ENCODE measurements at regions of chr2 and their contacts with region 1.

Region 1: DNA sequence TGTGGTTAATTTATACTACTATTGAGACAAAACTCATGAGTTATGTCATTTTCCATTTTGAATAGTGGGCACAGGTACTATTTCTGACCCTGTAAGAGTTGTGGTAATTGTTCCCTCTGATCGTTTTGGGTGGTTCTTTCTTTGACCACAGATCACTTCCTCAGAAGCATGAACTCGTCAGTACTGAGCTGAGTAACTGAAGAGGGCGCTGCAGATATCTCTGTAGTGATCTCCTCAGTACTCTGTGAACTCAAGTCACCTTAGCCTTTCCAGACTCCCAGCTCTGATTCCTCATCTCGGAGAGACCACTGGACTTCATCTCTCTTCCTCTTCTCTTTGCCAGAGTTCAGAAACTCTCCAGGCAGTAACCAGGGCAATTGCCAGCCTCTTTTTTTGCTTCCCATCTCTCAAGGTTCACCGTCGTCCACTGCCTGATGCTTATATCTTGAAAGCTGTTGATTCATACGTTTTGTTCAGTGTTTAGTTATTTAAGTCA is 9.4 kb upstream of the IL1RL1 start:
- DNase-seq: peak; percentile 88
- H3K4me3 Mint-ChIP-seq: peak overlapping the region; percentile 67
- H3K27ac Mint-ChIP-seq: peak overlapping the region; percentile 93
- H3K4me1 Mint-ChIP-seq: peaks cover 54% of the 10 kb centered on the region
- H3K27me3 Mint-ChIP-seq: peaks cover 2% of the 10 kb centered on the region

Region 2: DNA sequence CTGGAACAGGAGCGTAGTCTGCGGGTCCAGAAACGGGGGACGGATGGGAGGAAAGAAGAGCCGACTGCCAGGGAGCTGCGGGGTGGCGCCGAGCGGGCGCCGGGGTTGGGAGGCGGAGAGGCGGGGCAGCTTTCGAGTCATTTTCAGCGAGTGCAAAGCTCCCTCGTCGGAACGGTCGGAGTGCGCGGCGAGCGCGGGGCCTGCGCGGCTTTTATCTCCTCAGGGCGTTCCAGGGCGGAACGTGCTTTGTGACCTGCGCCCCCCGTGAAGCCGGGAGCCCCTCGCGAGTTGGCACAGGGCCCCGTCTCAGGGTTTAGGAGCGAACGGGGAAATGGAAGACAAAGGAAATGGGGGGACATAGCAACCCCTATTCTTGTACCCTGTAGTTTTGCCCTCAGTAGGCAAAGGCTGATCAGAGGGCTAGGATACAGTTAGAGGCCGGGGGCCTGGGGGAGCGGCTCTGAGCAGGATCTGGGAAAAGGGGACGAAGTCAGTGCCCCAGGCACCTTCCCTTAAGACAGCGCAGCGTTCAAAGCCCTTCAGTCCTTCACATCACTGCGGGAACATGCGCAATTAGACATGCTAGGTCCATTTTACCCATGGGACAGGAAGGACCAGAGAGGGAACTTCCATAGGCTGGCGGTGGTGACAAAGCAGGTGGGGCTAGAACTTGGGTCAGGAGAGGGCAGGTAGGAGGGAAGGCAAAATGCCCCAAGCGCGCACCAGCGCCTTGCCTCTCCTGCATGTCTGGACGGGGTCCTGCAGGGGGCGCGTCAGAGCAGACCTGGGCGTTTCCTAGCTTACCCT is 50.7 kb before region 1 on chr2:
- intact Hi-C with region 1: loop called (anchors 1 kb)
- DNase-seq: peak; percentile 87
- H3K4me3 Mint-ChIP-seq: peak overlapping the region; percentile 84
- H3K27ac Mint-ChIP-seq: peak overlapping the region; percentile 87
- H3K4me1 Mint-ChIP-seq: peaks cover 33% of the 10 kb centered on the region
- H3K27me3 Mint-ChIP-seq: peaks cover 2% of the 10 kb centered on the region

Region 3: DNA sequence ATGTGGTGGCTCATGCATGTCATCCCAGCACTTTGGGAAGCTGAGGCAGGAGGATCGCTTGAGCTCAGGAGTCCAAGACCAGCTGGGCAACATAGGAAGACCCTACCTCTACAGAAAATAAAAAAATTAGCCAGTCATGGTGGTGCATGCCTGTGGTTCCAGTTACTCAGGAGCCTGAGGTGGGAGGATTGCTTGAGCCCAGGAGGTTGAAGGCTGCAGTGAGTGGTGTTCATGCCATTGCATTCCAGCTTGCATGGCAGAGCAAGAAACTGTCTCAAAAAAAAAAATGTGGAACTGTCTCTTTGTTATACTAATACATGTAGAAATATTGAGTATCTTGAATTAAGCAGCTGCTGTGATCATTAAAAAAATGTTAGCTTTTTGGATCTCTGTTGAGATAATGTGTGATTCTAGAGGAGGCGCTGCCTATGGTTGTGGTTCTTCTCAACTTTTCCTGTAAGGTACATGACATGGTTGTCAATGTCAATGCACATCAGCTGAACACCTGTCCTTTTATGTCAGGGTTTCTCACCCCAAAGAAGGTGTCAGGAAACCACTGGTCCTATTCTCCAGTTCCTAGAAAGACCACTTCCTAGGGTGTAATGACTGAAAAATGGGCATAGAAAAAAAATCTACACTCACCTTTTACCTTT is 25.2 kb before region 1 on chr2:
- intact Hi-C with region 1: loop called (anchors 2 kb)
- DNase-seq: peak; percentile 81
- H3K4me3 Mint-ChIP-seq: peak overlapping the region; percentile 8
- H3K27ac Mint-ChIP-seq: peak overlapping the region; percentile 65
- H3K4me1 Mint-ChIP-seq: peaks cover 54% of the 10 kb centered on the region
- H3K27me3 Mint-ChIP-seq: no peaks in the 10 kb centered on the region

Region 4: DNA sequence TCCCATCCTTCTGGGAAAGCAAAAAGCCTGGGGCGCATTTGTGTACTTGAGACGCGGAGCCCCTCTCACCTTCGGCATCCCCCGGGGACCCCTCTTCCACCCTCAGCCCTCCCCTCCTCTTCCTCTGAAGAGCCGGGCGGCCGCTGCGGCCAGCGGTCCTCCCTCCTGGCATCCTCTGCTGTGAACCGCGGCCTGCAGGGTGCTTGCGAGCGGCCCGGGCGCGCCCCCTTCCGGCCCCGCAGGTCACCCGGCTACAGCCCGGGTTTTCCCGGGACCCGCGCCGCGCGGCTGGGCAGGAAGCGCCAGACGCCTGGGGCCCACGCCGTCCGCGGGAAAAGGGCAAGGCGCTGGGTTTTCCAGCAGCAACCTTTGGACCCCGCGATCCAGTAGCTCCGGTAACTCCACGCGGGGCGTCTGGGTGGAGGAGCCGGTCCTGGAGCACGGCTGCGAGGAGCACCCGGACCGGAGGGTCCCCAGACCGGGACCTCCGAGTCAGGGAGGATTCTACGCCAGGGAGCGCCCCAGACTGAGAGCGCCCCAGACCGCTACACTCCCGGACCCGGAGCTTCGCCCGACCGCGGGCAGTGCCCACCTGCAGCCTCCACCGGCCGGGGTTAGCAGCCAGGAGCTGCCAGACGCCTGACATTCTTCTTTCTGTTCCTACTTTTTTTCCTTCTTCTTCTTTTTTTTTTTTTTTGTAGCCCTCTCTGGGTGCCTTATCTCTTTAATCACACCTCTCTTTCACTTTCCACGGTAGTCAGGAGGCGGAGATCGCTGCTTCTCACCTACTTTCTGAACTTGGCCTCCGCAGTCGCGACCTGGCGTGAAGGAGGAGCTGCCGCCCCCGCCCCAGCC is 53.8 kb after region 1 on chr2 and contains the start of gene IL18R1:
- intact Hi-C with region 1: loop called (anchors 1 kb)
- DNase-seq: peak; percentile 92
- H3K4me3 Mint-ChIP-seq: peak within 1 kb of the TSS; percentile 99
- H3K27ac Mint-ChIP-seq: peak within 1 kb of the TSS; percentile 99
- H3K4me1 Mint-ChIP-seq: peaks cover 39% of the 10 kb centered on the region
- H3K27me3 Mint-ChIP-seq: no peaks in the 10 kb centered on the region
- total RNA-seq, gene IL18R1: 41.7 and 50.2 TPM in 2 replicates

Region 5: DNA sequence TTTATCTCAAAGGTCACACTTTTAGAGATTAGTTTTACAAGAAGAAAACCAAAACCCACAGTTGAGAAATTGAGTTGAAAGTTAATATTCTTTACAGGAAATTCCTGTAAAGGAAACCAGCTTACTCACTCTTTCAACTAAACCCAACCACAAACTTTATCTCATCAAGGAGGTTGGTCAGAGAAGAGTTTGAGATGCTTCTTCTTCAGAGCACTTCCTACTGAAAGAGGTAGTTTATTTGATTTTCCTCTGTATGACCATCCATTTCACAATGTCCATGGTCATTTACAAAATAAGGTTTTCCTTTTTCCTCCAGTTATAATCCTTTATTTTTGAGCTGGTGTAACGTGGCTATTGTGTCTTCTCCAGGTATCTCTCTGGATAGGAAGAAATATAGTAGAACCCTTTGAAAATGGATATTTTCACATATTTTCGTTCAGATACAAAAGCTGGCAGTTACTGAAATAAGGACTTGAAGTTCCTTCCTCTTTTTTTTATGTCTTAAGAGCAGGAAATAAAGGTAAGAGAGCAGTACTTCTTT is 116.6 kb after region 1 on chr2:
- intact Hi-C with region 1: loop called (anchors 5 kb)
- DNase-seq: peak; percentile 79
- H3K4me3 Mint-ChIP-seq: peak overlapping the region; percentile 86
- H3K27ac Mint-ChIP-seq: peak overlapping the region; percentile 94
- H3K4me1 Mint-ChIP-seq: peaks cover 69% of the 10 kb centered on the region
- H3K27me3 Mint-ChIP-seq: no peaks in the 10 kb centered on the region

Region 6: DNA sequence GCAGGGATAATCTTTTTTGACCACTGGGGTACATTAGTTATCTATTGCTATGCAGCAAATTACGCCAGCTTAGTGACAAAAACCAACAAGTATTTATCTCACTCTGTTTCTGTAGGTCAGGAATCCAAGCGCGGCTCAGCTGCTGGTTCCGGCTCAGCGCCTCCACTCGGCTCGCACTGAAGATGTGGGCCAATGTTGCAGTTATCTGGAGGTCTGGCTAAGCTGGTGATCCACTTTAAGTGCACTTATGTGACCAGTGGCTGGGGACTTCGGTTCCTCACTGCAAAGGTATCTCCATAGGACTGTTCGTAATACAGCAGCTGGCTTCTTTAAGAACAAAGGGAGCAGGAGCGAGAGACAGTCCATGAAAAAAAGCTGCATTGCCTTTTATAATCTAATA is 1051.9 kb after region 1 on chr2:
- intact Hi-C with region 1: no loop called
- DNase-seq: no peak
- H3K4me3 Mint-ChIP-seq: no peak overlapping the region
- H3K27ac Mint-ChIP-seq: no peak overlapping the region
- H3K4me1 Mint-ChIP-seq: no peaks in the 10 kb centered on the region
- H3K27me3 Mint-ChIP-seq: no peaks in the 10 kb centered on the region